ENCODE measurements at regions of chr9 and their contacts with region 1.

Region 1: GRCh38 chr9:131393622-131394463 is at the start of gene PRRC2B:
- DNase-seq: peak; percentile 94
- ATAC-seq: peak; percentile 44
- H3K4me3 Mint-ChIP-seq: peak within 1 kb of the TSS; percentile 88
- H3K27ac Mint-ChIP-seq: peak within 1 kb of the TSS; percentile 90
- H3K4me1 Mint-ChIP-seq: peaks cover 43% of the 10 kb centered on the region
- H3K27me3 Mint-ChIP-seq: no peaks in the 10 kb centered on the region
- total RNA-seq, gene PRRC2B: 151 to 184 TPM

Region 2: GRCh38 chr9:131270171-131271015 is 123.5 kb before region 1 on chr9:
- CTCF ChIA-PET with region 1: no interaction called
- POLR2A ChIA-PET with region 1: no interaction called
- intact Hi-C with region 1: loop called (anchors 2 kb)
- DNase-seq: peak; percentile 77
- ATAC-seq: peak; percentile 13
- H3K4me3 Mint-ChIP-seq: peak overlapping the region; percentile 90
- H3K27ac Mint-ChIP-seq: peak overlapping the region; percentile 100
- H3K4me1 Mint-ChIP-seq: peaks cover 58% of the 10 kb centered on the region
- H3K27me3 Mint-ChIP-seq: no peaks in the 10 kb centered on the region

Region 3: GRCh38 chr9:131366761-131367401 is 27.0 kb before region 1 on chr9:
- CTCF ChIA-PET with region 1: interaction called, 4 read pairs
- POLR2A ChIA-PET with region 1: interaction called, 12 read pairs
- intact Hi-C with region 1: loop called in 1 of 2 experiments (anchors 2 kb)
- DNase-seq: no peak
- ATAC-seq: no peak
- H3K4me3 Mint-ChIP-seq: no peak overlapping the region
- H3K27ac Mint-ChIP-seq: no peak overlapping the region
- H3K4me1 Mint-ChIP-seq: peaks cover under 1% of the 10 kb centered on the region
- H3K27me3 Mint-ChIP-seq: no peaks in the 10 kb centered on the region

Region 4: DNA sequence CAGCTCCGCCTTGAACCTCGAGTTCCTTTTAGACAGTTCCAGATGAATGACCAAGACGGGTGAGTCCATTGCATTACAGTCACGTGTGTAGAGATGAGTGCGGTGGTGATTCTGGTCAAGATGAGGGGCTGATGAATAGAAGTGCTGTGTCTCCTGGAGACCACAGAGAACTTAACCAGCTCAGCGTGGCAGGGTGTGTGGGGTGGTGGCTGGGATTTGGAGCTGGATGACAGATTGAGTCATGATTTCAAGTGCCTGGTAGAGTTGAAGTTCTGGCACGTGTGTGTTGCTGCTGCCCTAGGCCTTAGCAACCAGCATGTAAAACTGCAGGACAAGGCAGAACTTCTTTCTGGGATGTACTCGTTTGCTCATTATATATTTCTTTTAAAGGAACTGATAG is 53.3 kb after region 1 on chr9:
- CTCF ChIA-PET with region 1: no interaction called
- POLR2A ChIA-PET with region 1: no interaction called
- intact Hi-C with region 1: loop called in 1 of 2 experiments (anchors 2 kb)
- DNase-seq: no peak
- ATAC-seq: no peak
- H3K4me3 Mint-ChIP-seq: no peak overlapping the region
- H3K27ac Mint-ChIP-seq: peak overlapping the region; percentile 42
- H3K4me1 Mint-ChIP-seq: peaks cover 20% of the 10 kb centered on the region
- H3K27me3 Mint-ChIP-seq: no peaks in the 10 kb centered on the region

Region 5: DNA sequence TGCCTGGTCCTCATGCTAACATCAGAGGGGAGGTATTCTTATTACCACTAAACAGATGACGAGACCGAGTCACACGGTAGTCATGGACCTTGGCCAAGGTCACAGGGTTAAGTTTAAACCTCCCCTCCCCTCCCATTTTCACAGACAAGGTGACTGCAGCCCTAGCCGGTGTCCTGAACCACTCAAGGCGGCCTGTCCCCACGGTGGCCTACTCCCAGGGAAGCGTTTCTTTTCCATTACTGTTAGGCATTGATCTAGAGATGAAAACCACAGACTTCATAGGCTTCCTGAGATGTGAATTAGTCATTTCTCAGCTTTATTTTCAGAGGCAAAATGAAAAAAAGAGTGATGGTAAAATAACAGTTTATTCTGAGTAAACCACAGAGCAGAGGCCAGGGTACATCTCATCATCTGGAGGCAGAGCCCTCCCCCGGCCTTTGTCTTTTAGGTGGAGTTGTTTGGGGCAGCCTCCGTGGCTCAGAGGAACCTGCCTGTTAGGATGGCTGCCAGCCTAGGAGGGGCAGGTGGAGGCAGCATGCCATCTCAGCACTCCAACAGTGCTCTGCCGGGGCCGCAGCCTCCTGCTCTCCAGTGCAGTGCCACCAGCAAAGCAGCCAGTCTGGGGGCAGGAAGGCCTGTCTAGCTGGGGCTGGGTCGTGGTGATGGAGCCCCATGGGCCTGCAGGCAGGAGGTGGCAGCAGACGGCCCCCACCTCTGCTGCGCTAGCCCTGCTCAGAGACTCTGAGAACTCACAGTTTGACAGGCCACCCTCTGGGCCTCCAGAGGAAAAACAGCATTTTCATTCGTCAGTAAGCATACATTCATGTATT is 274.8 kb after region 1 on chr9:
- CTCF ChIA-PET with region 1: no interaction called
- POLR2A ChIA-PET with region 1: no interaction called
- intact Hi-C with region 1: loop called (anchors 5 to 10 kb)
- DNase-seq: peak; percentile 83
- ATAC-seq: peak; percentile 68
- H3K4me3 Mint-ChIP-seq: peak overlapping the region; percentile 54
- H3K27ac Mint-ChIP-seq: peak overlapping the region; percentile 96
- H3K4me1 Mint-ChIP-seq: peaks cover 93% of the 10 kb centered on the region
- H3K27me3 Mint-ChIP-seq: no peaks in the 10 kb centered on the region